Caco-2 (cell line): ENCODE measurements at regions of chr14 and their contacts with region 1.

Region 1: DNA sequence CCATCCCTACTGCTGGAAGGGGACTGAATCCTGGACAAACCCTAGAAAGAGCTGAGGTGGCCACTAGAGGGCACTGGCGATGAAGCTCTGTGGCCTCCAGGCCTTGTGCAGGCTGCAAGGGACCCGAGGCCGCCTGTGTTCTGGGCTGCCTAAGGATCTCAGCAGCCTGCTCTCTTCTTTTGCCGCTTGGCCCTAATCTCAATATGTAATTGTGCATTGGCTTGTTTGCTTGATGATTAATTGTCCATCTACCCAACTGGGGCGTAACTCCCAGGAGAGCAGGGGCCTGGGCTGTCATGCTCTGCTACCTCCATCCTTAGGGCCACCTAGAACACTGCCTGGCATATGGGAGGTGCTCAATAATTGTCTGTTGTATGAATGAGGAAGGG is 73.8 kb downstream of the SYNE3 start:
- DNase-seq: peak; percentile 83 to 84
- H3K4me3 ChIP-seq: no peak overlapping the region
- H3K4me3 Mint-ChIP-seq: peak overlapping the region; percentile 16
- H3K27ac Mint-ChIP-seq: peak overlapping the region; percentile 30
- H3K4me1 ChIP-seq: peaks cover 38% of the 10 kb centered on the region
- H3K4me1 Mint-ChIP-seq: peaks cover 24% of the 10 kb centered on the region
- H3K27me3 ChIP-seq: no peaks in the 10 kb centered on the region
- H3K27me3 Mint-ChIP-seq: no peaks in the 10 kb centered on the region
- CTCF ChIP-seq: peak; percentile 72 to 90

Region 2: GRCh38 chr14:95468448-95469145 is 26.0 kb after region 1 on chr14:
- CTCF ChIA-PET with region 1: interaction called, 24 read pairs
- POLR2A ChIA-PET with region 1: interaction called, 15 read pairs
- intact Hi-C with region 1: loop called (anchors 1 kb)
- DNase-seq: peak; percentile 88 to 94
- H3K4me3 ChIP-seq: no peak overlapping the region
- H3K4me3 Mint-ChIP-seq: peak overlapping the region; percentile 57
- H3K27ac Mint-ChIP-seq: peak overlapping the region; percentile 94
- H3K4me1 ChIP-seq: peaks cover 58% of the 10 kb centered on the region
- H3K4me1 Mint-ChIP-seq: peaks cover 41% of the 10 kb centered on the region
- H3K27me3 ChIP-seq: no peaks in the 10 kb centered on the region
- H3K27me3 Mint-ChIP-seq: no peaks in the 10 kb centered on the region
- CTCF ChIP-seq: no peak

Region 3: GRCh38 chr14:95490727-95491451 is 48.3 kb after region 1 on chr14:
- CTCF ChIA-PET with region 1: interaction called, 8 read pairs
- POLR2A ChIA-PET with region 1: no interaction called
- intact Hi-C with region 1: loop called (anchors 1 kb)
- DNase-seq: peak; percentile 73 to 82
- H3K4me3 ChIP-seq: no peak overlapping the region
- H3K4me3 Mint-ChIP-seq: peak overlapping the region; percentile 41
- H3K27ac Mint-ChIP-seq: peak overlapping the region; percentile 85
- H3K4me1 ChIP-seq: peaks cover 50% of the 10 kb centered on the region
- H3K4me1 Mint-ChIP-seq: peaks cover 44% of the 10 kb centered on the region
- H3K27me3 ChIP-seq: no peaks in the 10 kb centered on the region
- H3K27me3 Mint-ChIP-seq: no peaks in the 10 kb centered on the region
- CTCF ChIP-seq: no peak

Region 4: GRCh38 chr14:95515596-95516552 is 73.2 kb after region 1 on chr14:
- CTCF ChIA-PET with region 1: interaction called, 23 read pairs
- POLR2A ChIA-PET with region 1: no interaction called
- intact Hi-C with region 1: no loop called
- DNase-seq: peak; percentile 69 to 86
- H3K4me3 ChIP-seq: peak overlapping the region; percentile 60
- H3K4me3 Mint-ChIP-seq: peak overlapping the region; percentile 82
- H3K27ac Mint-ChIP-seq: no peak overlapping the region
- H3K4me1 ChIP-seq: peaks cover 17% of the 10 kb centered on the region
- H3K4me1 Mint-ChIP-seq: peaks cover 7% of the 10 kb centered on the region
- H3K27me3 ChIP-seq: no peaks in the 10 kb centered on the region
- H3K27me3 Mint-ChIP-seq: no peaks in the 10 kb centered on the region
- CTCF ChIP-seq: peak in 1 of 2 experiments; percentile 66

Region 5: GRCh38 chr14:95527387-95528002 is 84.9 kb after region 1 on chr14:
- CTCF ChIA-PET with region 1: interaction called, 29 read pairs
- POLR2A ChIA-PET with region 1: interaction called, 3 read pairs
- intact Hi-C with region 1: loop called (anchors 1 kb)
- DNase-seq: peak in 1 of 2 experiments; percentile 53
- H3K4me3 ChIP-seq: no peak overlapping the region
- H3K4me3 Mint-ChIP-seq: no peak overlapping the region
- H3K27ac Mint-ChIP-seq: peak overlapping the region; percentile 80
- H3K4me1 ChIP-seq: peaks cover 70% of the 10 kb centered on the region
- H3K4me1 Mint-ChIP-seq: peaks cover 48% of the 10 kb centered on the region
- H3K27me3 ChIP-seq: no peaks in the 10 kb centered on the region
- H3K27me3 Mint-ChIP-seq: no peaks in the 10 kb centered on the region
- CTCF ChIP-seq: peak; percentile 53 to 62

Region 6: DNA sequence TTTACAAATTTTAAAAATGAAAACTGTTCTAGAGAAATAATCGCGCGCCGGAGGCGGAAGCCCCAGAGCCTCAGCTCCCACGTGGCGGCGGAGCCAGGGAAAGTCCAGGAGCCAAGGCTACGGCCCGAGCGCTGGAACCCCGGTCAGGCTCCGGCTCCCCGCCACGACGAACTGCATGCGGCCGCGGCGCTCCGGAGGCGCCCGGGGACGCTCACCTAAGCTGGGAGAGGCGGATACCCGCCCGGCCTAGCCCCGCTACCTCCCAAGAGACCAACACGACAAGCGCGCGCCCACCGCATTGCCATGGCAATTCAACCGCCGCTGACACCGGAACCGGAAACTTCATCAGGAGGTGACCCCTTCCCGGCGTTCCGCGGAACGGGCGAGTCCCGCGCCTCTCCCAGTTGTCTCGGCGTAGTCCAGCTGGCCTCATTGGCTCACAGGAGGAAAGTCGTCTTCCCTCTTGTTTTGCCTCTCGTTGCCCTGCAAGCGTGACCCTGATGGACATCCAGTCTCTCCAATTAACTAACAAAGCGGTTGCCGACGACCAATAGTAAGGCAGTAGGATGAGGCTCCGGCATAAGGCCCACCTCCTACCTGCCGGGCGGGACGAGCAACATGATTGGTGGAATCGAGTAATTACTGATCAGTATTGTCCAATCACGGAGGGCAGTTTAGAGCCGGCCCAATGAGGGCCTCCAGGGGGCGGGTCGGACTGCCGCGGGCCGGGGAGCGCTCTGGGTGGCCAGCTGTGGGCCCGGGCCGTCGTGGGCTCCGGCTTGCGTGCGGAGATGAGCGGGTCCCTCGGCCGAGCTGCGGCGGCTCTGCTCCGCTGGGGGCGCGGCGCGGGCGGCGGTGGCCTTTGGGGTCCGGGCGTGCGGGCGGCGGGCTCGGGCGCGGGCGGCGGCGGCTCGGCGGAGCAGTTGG is 91.9 kb after region 1 on chr14 and contains the start of gene GLRX5:
- CTCF ChIA-PET with region 1: interaction called, 10 read pairs
- POLR2A ChIA-PET with region 1: interaction called, 8 read pairs
- intact Hi-C with region 1: loop called (anchors 1 kb)
- DNase-seq: peak; percentile 98 to 100
- H3K4me3 ChIP-seq: peak within 1 kb of the TSS; percentile 83
- H3K4me3 Mint-ChIP-seq: peak within 1 kb of the TSS; percentile 87
- H3K27ac Mint-ChIP-seq: peak within 1 kb of the TSS; percentile 50
- H3K4me1 ChIP-seq: peaks cover 37% of the 10 kb centered on the region
- H3K4me1 Mint-ChIP-seq: peaks cover 25% of the 10 kb centered on the region
- H3K27me3 ChIP-seq: no peaks in the 10 kb centered on the region
- H3K27me3 Mint-ChIP-seq: no peaks in the 10 kb centered on the region
- CTCF ChIP-seq: no peak
- total RNA-seq, gene GLRX5: 66.2 and 67.8 TPM in 2 replicates

Region 7: DNA sequence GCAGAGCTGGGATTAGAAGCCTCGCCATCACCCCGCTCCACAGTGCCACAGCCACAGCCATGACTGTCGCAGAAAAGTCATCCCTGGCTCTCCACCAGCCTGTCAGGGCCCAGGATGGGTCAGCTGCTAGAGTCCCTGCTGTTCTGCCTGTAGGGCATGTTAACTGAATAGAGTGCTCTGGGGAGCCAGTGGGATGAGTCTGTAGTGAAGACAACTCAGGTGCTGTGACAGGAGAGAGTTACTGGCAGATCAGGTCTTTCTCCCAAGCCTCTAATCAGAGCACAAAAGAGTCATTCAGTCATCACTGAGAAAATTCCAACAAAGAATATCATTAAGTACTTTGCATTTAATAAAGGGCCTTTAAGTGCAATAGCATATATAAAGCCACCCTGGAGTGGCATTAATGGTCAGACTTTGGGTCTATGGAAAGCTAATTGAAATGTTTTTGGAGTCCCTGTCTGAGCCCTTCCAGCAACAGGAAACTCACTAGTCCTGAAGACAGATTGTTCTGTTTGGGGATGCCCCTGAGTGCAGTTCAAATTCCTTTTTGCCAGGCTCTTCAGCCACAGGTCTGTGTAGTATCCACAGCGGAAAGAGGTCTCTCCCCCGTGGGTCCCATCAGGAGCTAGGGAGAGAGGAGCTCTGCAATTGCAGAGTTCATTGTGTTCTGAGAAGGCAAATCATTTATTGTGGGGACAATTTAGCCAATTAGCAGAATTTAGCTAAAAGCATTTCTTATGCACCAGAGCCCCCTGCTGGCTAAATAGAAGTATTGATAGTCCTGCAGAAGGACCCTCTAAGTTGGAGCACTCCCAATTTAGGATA is 551.4 kb after region 1 on chr14:
- CTCF ChIA-PET with region 1: no interaction called
- POLR2A ChIA-PET with region 1: no interaction called
- intact Hi-C with region 1: loop called (anchors 10 kb)
- DNase-seq: peak in 1 of 2 experiments; percentile 25
- H3K4me3 ChIP-seq: no peak overlapping the region
- H3K4me3 Mint-ChIP-seq: no peak overlapping the region
- H3K27ac Mint-ChIP-seq: no peak overlapping the region
- H3K4me1 ChIP-seq: no peaks in the 10 kb centered on the region
- H3K4me1 Mint-ChIP-seq: no peaks in the 10 kb centered on the region
- H3K27me3 ChIP-seq: no peaks in the 10 kb centered on the region
- H3K27me3 Mint-ChIP-seq: peaks cover 3% of the 10 kb centered on the region
- CTCF ChIP-seq: peak; percentile 76 to 79